Caco-2 (cell line): ENCODE measurements at regions of chr18 and their contacts with region 1.

Region 1: GRCh38 chr18:2223849-2224248 is 347.5 kb downstream of the METTL4 start:
- DNase-seq: peak in 1 of 2 experiments; percentile 52
- H3K4me3 ChIP-seq: no peak overlapping the region
- H3K4me3 Mint-ChIP-seq: no peak overlapping the region
- H3K27ac Mint-ChIP-seq: no peak overlapping the region
- H3K4me1 ChIP-seq: peaks cover 4% of the 10 kb centered on the region
- H3K4me1 Mint-ChIP-seq: peaks cover 16% of the 10 kb centered on the region
- H3K27me3 ChIP-seq: no peaks in the 10 kb centered on the region
- H3K27me3 Mint-ChIP-seq: no peaks in the 10 kb centered on the region
- CTCF ChIP-seq: peak; percentile 37 to 59

Region 2: DNA sequence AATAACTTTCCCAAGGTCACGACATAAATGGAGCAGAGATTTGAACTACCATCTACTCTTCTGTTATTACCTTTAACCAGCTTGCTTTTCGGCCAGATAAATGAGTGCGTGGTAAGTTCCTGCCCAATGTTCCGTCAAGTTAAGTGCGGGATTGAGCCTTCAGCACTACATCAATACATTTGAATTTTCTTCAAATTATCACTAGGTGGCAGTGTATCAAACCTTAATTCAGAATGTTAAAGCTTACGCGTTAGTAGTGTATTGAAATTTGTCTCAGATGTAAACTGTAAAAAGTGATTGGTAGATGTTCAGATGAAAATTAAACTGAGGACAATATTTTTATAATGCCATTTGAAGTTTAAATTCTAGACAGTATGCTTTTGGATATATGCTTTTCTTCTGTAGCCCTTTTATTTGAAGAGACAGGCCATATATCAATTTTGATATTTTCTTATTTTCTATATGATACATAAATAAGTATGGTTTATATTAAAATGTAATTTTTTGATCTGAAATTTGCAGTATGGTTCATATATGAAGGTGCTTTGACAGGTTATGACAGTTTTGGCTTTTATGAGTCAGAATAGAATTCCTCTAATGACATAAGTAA is 637.9 kb before region 1 on chr18:
- CTCF ChIA-PET with region 1: no interaction called
- POLR2A ChIA-PET with region 1: no interaction called
- intact Hi-C with region 1: loop called (anchors 2 kb)
- DNase-seq: peak in 1 of 2 experiments; percentile 9
- H3K4me3 ChIP-seq: no peak overlapping the region
- H3K4me3 Mint-ChIP-seq: no peak overlapping the region
- H3K27ac Mint-ChIP-seq: no peak overlapping the region
- H3K4me1 ChIP-seq: no peaks in the 10 kb centered on the region
- H3K4me1 Mint-ChIP-seq: no peaks in the 10 kb centered on the region
- H3K27me3 ChIP-seq: no peaks in the 10 kb centered on the region; the same call in none of the 2 replicates
- H3K27me3 Mint-ChIP-seq: peaks cover 11% of the 10 kb centered on the region
- CTCF ChIP-seq: peak in 1 of 2 experiments; percentile 48

Region 3: DNA sequence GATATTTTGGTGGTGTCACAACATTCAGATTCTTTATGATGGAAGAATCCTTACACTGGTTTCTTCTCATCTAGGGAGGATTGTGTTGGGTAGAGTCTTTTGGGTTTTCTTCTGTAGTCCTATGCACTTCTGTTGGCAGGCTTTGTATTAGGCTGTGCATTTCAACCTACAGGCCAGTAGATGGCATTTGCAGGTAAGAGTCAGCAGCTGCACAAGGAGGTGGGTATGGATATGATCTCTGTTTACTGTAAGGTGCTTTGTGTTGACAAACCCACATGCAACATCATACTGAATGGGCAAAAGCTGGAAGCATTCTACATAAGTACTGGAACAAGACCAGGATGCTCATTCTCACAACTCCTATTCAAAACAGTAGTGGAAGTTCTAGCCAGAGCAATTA is 309.4 kb before region 1 on chr18:
- CTCF ChIA-PET with region 1: no interaction called
- POLR2A ChIA-PET with region 1: no interaction called
- intact Hi-C with region 1: loop called (anchors 1 kb)
- DNase-seq: peak; percentile 32 to 41
- H3K4me3 ChIP-seq: no peak overlapping the region
- H3K4me3 Mint-ChIP-seq: no peak overlapping the region
- H3K27ac Mint-ChIP-seq: no peak overlapping the region
- H3K4me1 ChIP-seq: no peaks in the 10 kb centered on the region
- H3K4me1 Mint-ChIP-seq: no peaks in the 10 kb centered on the region
- H3K27me3 ChIP-seq: no peaks in the 10 kb centered on the region
- H3K27me3 Mint-ChIP-seq: no peaks in the 10 kb centered on the region
- CTCF ChIP-seq: peak; percentile 41 to 63

Region 4: DNA sequence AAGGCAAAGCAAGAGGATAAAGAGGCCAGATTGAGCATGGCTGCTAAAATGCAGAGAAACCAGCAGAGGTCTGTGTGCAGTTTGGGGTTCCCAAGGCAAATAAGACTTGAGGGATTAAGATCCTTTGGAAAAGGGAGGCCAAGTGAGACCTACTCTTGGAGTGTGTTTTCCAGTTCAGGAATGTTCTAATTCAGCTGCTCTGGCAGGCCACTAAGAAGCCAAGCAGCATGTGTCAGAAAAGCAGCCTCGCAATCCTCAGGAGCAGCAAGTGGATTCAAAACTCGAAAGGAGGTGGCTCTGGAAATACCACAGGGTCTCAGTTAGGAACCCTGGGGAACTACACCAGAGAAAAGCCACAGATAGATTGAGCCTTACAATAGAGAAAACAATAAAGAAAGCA is 221.7 kb before region 1 on chr18:
- CTCF ChIA-PET with region 1: no interaction called
- POLR2A ChIA-PET with region 1: no interaction called
- intact Hi-C with region 1: loop called (anchors 5 kb)
- DNase-seq: peak; percentile 36 to 41
- H3K4me3 ChIP-seq: no peak overlapping the region
- H3K4me3 Mint-ChIP-seq: peak overlapping the region; percentile 56
- H3K27ac Mint-ChIP-seq: peak overlapping the region; percentile 92
- H3K4me1 ChIP-seq: peaks cover 39% of the 10 kb centered on the region
- H3K4me1 Mint-ChIP-seq: peaks cover 44% of the 10 kb centered on the region
- H3K27me3 ChIP-seq: no peaks in the 10 kb centered on the region
- H3K27me3 Mint-ChIP-seq: no peaks in the 10 kb centered on the region
- CTCF ChIP-seq: no peak

Region 5: DNA sequence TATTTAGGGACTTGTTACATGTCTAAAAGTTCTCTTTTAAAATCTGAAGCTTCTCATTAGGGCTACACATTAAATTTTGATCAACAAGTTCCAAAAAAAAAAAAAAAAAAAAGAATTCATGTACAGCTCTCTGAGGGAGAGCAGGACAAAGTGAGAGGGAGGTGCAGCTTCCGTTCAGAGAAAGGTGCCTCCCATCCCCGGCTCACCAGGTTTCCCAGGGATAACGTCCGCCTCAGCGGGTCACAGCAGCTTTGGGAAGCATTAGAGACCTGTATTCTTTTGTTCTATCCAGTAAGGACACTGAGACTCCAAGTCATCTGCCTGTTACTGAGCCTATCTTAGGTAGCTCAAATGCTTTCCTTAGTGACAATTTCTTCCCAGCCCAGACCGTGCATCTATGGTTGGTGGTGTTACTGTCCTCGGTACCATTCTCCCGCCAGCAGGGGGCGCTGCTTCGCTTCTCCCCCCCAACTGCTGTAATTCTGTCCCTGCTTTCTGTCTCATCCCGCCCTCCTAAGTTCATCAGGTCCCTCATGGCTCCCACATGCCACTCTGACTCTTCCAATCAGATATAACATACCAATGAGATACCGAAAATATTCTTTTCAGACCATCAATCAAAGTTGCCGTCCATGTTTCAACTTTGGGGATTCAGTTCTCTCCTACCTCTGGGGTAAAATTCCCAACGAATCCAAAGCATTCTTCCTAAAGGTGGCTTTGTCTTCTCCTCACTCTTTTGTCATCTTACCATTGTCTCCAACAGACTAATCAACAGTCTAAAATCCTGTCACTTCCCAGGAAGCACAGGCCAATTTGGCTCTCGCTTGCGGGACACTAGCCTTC is 119.0 kb before region 1 on chr18:
- CTCF ChIA-PET with region 1: interaction called, 6 read pairs
- POLR2A ChIA-PET with region 1: no interaction called
- intact Hi-C with region 1: loop called (anchors 1 kb)
- DNase-seq: peak; percentile 48 to 61
- H3K4me3 ChIP-seq: no peak overlapping the region
- H3K4me3 Mint-ChIP-seq: no peak overlapping the region
- H3K27ac Mint-ChIP-seq: no peak overlapping the region
- H3K4me1 ChIP-seq: peaks cover 4% of the 10 kb centered on the region; the same call in 1 of the 2 replicates
- H3K4me1 Mint-ChIP-seq: no peaks in the 10 kb centered on the region
- H3K27me3 ChIP-seq: no peaks in the 10 kb centered on the region
- H3K27me3 Mint-ChIP-seq: no peaks in the 10 kb centered on the region
- CTCF ChIP-seq: peak; percentile 73 to 85

Region 6: GRCh38 chr18:2134364-2134763 is 89.5 kb before region 1 on chr18:
- CTCF ChIA-PET with region 1: no interaction called
- POLR2A ChIA-PET with region 1: no interaction called
- intact Hi-C with region 1: loop called (anchors 5 kb)
- DNase-seq: no peak
- H3K4me3 ChIP-seq: no peak overlapping the region
- H3K4me3 Mint-ChIP-seq: no peak overlapping the region
- H3K27ac Mint-ChIP-seq: no peak overlapping the region
- H3K4me1 ChIP-seq: no peaks in the 10 kb centered on the region; the same call in 1 of the 2 replicates
- H3K4me1 Mint-ChIP-seq: peaks cover 5% of the 10 kb centered on the region
- H3K27me3 ChIP-seq: no peaks in the 10 kb centered on the region
- H3K27me3 Mint-ChIP-seq: no peaks in the 10 kb centered on the region
- CTCF ChIP-seq: peak in 1 of 2 experiments; percentile 32

Region 7: GRCh38 chr18:2547477-2548087 is 323.7 kb after region 1 on chr18:
- CTCF ChIA-PET with region 1: interaction called, 3 read pairs
- POLR2A ChIA-PET with region 1: no interaction called
- intact Hi-C with region 1: loop called (anchors 5 kb)
- DNase-seq: peak in 1 of 2 experiments; percentile 23
- H3K4me3 ChIP-seq: no peak overlapping the region
- H3K4me3 Mint-ChIP-seq: no peak overlapping the region
- H3K27ac Mint-ChIP-seq: no peak overlapping the region
- H3K4me1 ChIP-seq: no peaks in the 10 kb centered on the region
- H3K4me1 Mint-ChIP-seq: no peaks in the 10 kb centered on the region
- H3K27me3 ChIP-seq: no peaks in the 10 kb centered on the region
- H3K27me3 Mint-ChIP-seq: no peaks in the 10 kb centered on the region
- CTCF ChIP-seq: peak; percentile 33 to 39